Kidney (tissue), 22 donors: ENCODE measurements at regions of chr3 and their contacts with region 1.

Region 1: DNA sequence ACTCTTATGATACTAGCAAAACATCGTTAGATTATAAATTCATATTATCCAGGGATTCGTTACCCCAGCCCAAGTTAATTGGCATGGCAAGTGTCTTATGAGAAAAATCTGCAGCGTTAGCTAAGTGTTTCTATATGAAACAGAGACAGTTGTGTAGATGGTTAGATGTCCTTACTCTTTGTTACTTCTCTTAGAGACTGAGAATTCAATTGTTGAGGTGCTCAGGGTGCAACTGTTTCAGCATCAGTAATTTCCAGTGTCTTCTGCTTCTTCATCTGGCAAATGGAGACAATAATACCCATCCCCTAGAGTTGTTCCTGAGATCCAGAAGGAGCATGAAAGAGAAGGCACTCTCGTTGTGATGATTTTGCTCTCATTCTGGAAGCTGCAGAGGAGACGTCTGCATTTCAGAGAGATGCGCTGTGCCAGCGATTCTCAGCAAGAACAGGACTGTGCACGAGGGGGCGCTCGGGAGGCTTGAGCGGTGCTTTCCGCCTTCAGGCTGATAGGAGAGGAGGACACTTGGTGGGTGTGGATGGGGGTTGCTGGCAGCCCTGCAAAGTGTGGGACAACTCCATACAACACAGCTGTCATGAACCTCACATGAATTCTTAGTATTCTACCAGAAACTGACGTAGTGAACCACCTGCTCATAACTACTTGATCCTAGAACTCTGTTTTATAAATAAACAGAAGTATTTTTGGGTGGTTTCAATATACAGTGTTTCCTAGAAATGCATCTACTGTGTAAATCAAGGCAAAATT is 39.7 kb upstream of the SPSB4 start:
- DNase-seq: peak; percentile 84 to 88 (median 87)
- H3K4me3 ChIP-seq: no peak overlapping the region
- H3K27ac ChIP-seq: no peak overlapping the region
- H3K4me1 ChIP-seq: no peaks in the 10 kb centered on the region
- H3K27me3 ChIP-seq: no peaks in the 10 kb centered on the region
- CTCF ChIP-seq: peak; percentile 79

Region 2: DNA sequence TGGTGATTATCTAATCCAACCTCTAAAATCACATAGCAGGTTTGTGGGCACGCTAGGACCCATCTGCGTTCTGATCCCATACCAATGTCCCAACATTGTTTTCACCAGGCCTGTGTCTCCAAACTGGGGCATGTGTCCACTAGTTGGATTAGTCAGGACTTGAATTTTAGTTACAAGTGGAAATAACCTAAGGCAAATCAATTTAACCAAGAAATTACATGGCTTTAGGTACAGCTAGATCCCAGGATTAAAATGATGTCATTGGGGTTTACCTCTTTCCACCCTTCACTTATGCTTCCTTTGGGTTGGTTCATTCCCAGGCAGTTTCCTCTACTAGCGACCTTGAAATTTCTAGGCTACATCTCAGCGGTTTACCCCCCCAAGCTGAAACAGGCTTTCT is 173.0 kb after region 1 on chr3:
- intact Hi-C with region 1: loop called (anchors 10 kb)
- DNase-seq: no peak
- H3K4me3 ChIP-seq: no peak overlapping the region
- H3K27ac ChIP-seq: no peak overlapping the region
- H3K4me1 ChIP-seq: no peaks in the 10 kb centered on the region
- H3K27me3 ChIP-seq: no peaks in the 10 kb centered on the region
- CTCF ChIP-seq: no peak